HCT116 (cell line): ENCODE measurements at regions of chr14 and their contacts with region 1.

Region 1: DNA sequence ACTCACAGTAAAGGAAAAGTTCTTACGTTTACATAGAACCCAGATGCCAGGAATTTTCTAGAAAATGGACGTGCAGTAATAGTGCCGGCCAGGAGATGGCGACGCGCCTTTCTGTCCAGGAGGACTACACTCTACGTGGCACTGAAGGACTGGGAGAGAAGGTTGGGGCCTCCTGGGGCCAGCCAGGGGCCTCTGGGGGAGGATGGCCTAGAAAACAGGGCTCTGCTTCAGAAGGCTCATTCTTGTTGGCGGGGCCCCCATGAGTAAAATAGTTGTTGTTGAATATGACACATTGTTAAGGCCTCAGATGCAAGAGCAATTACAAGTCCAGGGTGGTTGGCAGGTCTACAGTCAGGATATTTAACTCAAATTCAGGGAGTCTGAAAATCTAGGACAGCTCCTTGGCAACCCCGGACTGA is 120.1 kb upstream of the MAX start:
- DNase-seq: peak; percentile 60
- ATAC-seq: peak; percentile 94
- H3K4me3 ChIP-seq: no peak overlapping the region
- H3K27ac ChIP-seq: no peak overlapping the region
- H3K4me1 ChIP-seq: peaks cover 0 to 33% of the 10 kb centered on the region in 2 experiments; a peak in 3 of 4 replicates
- H3K27me3 ChIP-seq: no peaks in the 10 kb centered on the region
- CTCF ChIP-seq: peak; percentile 74 to 89 (median 87); a peak in 5 of 6 replicates
- POLR2A ChIP-seq: no peak
- RAD21 ChIP-seq: peak; percentile 95

Region 2: GRCh38 chr14:65019944-65020566 is 202.4 kb before region 1 on chr14:
- CTCF ChIA-PET with region 1: no interaction called
- POLR2A ChIA-PET with region 1: no interaction called
- RAD21 ChIA-PET with region 1: no interaction called
- intact Hi-C with region 1: no loop called
- DNase-seq: peak; percentile 53
- ATAC-seq: peak; percentile 97
- H3K4me3 ChIP-seq: no peak overlapping the region
- H3K27ac ChIP-seq: no peak overlapping the region
- H3K4me1 ChIP-seq: peaks cover 0 to 4% of the 10 kb centered on the region in 2 experiments; a peak in 1 of 4 replicates
- H3K27me3 ChIP-seq: no peaks in the 10 kb centered on the region
- CTCF ChIP-seq: peak; percentile 60 to 77 (median 76)
- POLR2A ChIP-seq: no peak
- RAD21 ChIP-seq: peak; percentile 60

Region 3: DNA sequence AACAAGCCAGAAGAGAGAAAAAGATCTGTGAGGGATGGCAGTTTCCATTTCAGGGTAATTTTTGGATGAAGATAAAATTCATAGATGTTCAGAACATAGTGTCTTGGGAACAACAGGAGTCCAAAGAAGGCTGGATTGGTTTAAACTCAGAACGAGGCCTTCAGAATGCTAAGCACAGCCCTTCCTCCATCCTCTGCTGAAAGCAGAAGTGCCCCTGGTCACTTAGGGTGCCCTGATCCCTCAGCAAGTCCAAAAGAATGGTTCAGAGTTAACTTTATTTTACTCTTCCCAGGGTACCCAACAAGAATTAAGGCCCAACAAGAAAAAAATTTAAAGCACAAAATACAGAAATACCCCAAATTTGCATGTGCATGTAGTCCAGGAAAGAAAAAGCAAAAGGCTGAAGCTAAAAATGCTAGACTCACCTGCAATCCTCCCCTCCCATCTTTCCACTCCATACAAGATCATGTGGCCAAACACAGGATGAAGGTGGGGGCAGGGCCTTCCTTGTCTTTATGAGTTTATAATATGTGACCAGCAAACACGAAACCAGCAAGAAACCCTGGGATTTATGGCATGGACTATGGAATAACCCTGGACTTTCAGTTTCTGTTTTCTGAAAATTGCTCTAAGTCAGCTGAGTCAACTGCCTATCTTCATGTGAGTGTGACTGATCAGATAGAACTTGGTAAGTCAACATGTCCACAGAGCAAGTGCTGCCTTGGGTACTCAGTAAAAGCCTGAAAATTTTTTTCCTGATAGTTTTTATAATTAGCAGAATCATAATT is 141.3 kb before region 1 on chr14:
- CTCF ChIA-PET with region 1: no interaction called
- POLR2A ChIA-PET with region 1: no interaction called
- RAD21 ChIA-PET with region 1: no interaction called
- intact Hi-C with region 1: no loop called
- DNase-seq: no peak
- ATAC-seq: no peak
- H3K4me3 ChIP-seq: no peak overlapping the region
- H3K27ac ChIP-seq: no peak overlapping the region
- H3K4me1 ChIP-seq: no peaks in the 10 kb centered on the region
- H3K27me3 ChIP-seq: no peaks in the 10 kb centered on the region
- CTCF ChIP-seq: no peak
- POLR2A ChIP-seq: no peak
- RAD21 ChIP-seq: no peak

Region 4: GRCh38 chr14:65599375-65599774 is 376.9 kb after region 1 on chr14:
- CTCF ChIA-PET with region 1: no interaction called
- POLR2A ChIA-PET with region 1: no interaction called
- RAD21 ChIA-PET with region 1: no interaction called
- intact Hi-C with region 1: loop called (anchors 5 kb)
- DNase-seq: no peak
- ATAC-seq: no peak
- H3K4me3 ChIP-seq: no peak overlapping the region
- H3K27ac ChIP-seq: no peak overlapping the region
- H3K4me1 ChIP-seq: no peaks in the 10 kb centered on the region
- H3K27me3 ChIP-seq: no peaks in the 10 kb centered on the region
- CTCF ChIP-seq: no peak
- POLR2A ChIP-seq: no peak
- RAD21 ChIP-seq: no peak

Region 5: GRCh38 chr14:65824285-65824977 is 602.0 kb after region 1 on chr14:
- CTCF ChIA-PET with region 1: no interaction called
- POLR2A ChIA-PET with region 1: no interaction called
- RAD21 ChIA-PET with region 1: no interaction called
- intact Hi-C with region 1: loop called (anchors 1 kb)
- DNase-seq: peak; percentile 56
- ATAC-seq: peak; percentile 94
- H3K4me3 ChIP-seq: no peak overlapping the region
- H3K27ac ChIP-seq: no peak overlapping the region
- H3K4me1 ChIP-seq: no peaks in the 10 kb centered on the region
- H3K27me3 ChIP-seq: peaks cover 20% of the 10 kb centered on the region; the same call in 1 of the 2 replicates
- CTCF ChIP-seq: peak; percentile 64 to 93 (median 87); a peak in 5 of 6 replicates
- POLR2A ChIP-seq: no peak
- RAD21 ChIP-seq: peak; percentile 80

Region 6: GRCh38 chr14:65958664-65959562 is 736.5 kb after region 1 on chr14:
- CTCF ChIA-PET with region 1: no interaction called
- POLR2A ChIA-PET with region 1: no interaction called
- RAD21 ChIA-PET with region 1: no interaction called
- intact Hi-C with region 1: loop called (anchors 1 kb)
- DNase-seq: peak; percentile 15
- ATAC-seq: peak; percentile 62
- H3K4me3 ChIP-seq: no peak overlapping the region
- H3K27ac ChIP-seq: no peak overlapping the region
- H3K4me1 ChIP-seq: no peaks in the 10 kb centered on the region
- H3K27me3 ChIP-seq: no peaks in the 10 kb centered on the region; the same call in 1 of the 2 replicates
- CTCF ChIP-seq: peak; percentile 23 to 63 (median 42); a peak in 3 of 6 replicates
- POLR2A ChIP-seq: no peak
- RAD21 ChIP-seq: peak; percentile 62